Tibial artery (tissue), 4 donors: ENCODE measurements at regions of chr5 and their contacts with region 1.

Region 1: DNA sequence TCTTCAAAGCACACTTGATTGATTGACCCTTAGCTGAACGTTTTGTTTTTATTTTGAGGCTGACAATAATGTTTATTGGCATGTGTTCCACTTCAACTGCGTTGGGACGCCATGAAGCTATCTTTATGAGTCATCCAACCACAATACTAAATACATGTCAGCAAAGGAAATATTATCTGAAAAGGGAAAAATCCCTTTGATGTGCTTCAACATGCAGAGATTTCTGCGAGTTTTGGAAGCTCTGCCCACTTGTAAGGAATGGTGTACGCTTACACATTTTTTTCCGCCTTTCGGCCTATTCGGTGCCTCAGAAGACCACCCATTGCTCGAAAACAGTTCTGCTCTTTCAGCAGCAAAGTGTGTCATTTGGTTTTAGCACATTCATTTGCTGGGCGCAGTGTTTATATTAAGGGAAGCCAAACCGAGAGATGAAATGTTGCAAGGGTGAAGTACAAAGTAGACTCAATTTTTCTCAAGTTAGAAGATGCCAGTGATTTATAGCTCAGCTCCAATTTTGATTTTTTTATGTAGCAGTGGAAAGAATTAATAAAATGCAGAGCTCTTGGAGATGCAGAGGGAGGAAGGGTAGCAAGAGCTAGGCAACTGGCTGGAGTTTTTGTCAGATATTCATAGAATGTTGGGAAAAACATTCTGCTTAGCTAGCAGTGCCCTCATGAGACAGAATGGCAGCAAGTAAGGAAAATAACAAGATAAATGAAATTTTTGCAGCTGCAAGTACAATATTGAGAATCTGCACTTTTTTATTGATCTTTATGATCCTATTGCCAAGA is 68.9 kb downstream of the PRDM6 start:
- DNase-seq: no peak
- H3K4me3 ChIP-seq: peak overlapping the region in 1 of 2 donors; percentile 1
- H3K27ac ChIP-seq: peak overlapping the region; percentile 46 to 68
- H3K4me1 ChIP-seq: peaks cover 0 to 94% (median 50%) of the 10 kb centered on the region in 4 donors
- H3K27me3 ChIP-seq: no peaks in the 10 kb centered on the region
- CTCF ChIP-seq: no peak

Region 2: DNA sequence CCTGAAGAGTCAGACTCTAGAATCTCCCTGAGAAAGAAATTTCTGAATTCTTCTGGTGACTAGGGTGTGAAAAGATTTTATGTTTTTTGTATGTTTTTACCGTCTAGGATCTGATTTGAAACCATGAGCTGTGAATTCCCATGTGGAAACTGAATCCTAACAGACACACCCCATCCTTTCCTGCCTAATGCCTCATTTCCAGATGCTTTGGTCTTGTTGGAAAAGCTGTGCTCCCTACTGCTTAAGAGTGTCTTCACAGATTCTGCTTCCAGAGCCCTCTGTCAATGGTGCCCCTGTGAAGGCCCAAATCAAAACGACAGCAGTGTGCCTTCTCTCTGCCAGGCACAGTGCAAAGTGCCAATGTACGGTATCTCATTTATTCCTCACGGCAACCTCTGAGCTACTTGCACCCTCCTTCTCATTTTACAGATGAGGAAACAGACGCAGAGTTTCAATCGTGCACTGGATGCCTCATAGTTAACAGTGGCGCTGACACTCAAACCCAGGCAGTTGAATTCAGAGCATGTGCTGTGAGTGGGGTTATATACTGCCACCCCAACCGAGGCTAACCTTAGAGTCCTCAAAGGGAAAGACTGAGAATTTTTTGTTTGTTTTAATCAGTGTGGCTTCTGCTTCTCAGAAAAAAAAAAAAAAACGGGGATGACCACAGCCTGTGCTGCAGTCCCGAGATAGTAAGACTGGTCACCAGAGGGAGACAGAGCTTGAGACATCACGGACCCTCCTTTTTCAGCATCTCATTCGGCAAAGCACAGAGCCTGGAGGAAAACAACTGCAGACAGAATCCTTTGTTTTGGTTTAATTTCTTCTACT is 657.5 kb before region 1 on chr5:
- intact Hi-C with region 1: loop called (anchors 5 kb)
- DNase-seq: peak; percentile 52 to 74
- H3K4me3 ChIP-seq: peak overlapping the region; percentile 14 to 29
- H3K27ac ChIP-seq: peak overlapping the region; percentile 61 to 70
- H3K4me1 ChIP-seq: peaks cover 0 to 31% (median 13%) of the 10 kb centered on the region in 4 donors
- H3K27me3 ChIP-seq: no peaks in the 10 kb centered on the region
- CTCF ChIP-seq: peak; percentile 43 to 57

Region 3: DNA sequence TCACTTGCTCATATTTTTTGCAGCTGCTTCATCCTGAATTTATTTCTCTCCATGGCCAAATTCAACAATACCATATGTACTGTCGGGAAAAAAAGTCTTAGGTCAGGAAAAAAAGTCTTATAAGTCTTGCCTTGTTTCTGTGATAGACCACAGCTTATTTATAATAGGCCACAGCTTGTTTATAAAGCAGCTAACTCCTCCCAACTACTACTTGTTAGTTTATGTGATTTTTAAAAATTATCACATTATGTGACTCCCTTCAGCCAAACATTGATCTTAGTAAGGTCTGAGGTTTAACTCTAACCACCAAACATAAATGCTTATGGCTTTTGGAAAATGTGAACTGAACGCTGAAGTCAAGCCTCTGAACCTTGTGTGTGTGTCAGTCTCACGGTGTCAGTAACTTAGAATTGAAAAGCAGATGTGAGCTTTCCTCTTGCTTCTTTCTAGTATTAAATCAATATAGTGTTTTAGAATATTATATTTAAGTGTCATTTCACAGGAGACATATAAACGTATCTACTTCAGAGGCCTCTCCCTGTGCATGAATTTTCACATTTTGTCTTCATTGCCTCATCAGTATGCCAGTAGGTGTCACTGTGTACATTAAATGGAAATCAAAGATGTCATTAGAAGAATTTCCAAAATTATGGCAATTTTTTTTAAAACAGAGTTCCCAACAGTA is 261.2 kb before region 1 on chr5:
- intact Hi-C with region 1: loop called (anchors 5 kb)
- DNase-seq: no peak
- H3K4me3 ChIP-seq: no peak overlapping the region
- H3K27ac ChIP-seq: no peak overlapping the region
- H3K4me1 ChIP-seq: peaks cover 0 to 2% (median 0%) of the 10 kb centered on the region in 4 donors
- H3K27me3 ChIP-seq: no peaks in the 10 kb centered on the region
- CTCF ChIP-seq: peak; percentile 62 to 67

Region 4: DNA sequence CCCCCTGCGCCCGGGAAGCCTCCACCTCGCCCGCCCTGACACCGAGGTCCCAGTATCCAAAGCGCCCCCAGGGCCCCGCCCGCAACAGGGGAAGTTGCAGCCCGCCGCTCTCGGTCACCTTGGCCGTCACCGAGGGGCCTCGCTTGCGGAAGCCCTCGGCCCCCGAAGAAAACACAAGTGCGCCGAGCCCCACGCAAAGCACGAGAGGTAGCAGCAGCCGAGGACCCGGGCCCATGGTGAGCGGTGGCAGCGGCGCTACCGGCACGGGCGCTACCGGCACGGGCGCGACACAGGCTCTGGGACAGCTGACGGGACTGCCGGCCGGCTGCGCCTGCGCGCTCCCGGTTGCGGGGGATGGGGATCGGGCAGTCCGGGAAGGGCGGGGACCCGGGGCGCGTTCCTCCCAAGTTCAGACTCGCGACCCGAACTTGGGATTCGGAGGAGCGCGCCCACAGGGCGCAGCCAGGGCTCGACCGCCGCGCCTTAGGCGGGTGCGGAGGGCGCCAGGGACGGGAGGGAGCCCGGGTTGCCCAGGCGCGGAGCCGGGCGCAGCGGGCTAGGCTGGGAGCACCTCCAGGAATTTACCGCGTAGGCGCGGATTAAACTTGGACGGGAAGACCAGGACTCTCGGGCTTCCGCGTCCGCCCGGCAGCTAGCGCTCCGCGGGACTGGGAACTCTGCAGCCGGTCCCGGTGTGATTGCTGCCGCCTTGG is 121.4 kb before region 1 on chr5 and contains the start of gene PPIC:
- intact Hi-C with region 1: loop called (anchors 5 kb)
- DNase-seq: peak; percentile 86 to 94
- H3K4me3 ChIP-seq: peak within 1 kb of the TSS; percentile 86
- H3K27ac ChIP-seq: peak within 1 kb of the TSS; percentile 86 to 97
- H3K4me1 ChIP-seq: peaks cover 0 to 24% (median 15%) of the 10 kb centered on the region in 4 donors
- H3K27me3 ChIP-seq: no peaks in the 10 kb centered on the region
- CTCF ChIP-seq: no peak

Region 5: DNA sequence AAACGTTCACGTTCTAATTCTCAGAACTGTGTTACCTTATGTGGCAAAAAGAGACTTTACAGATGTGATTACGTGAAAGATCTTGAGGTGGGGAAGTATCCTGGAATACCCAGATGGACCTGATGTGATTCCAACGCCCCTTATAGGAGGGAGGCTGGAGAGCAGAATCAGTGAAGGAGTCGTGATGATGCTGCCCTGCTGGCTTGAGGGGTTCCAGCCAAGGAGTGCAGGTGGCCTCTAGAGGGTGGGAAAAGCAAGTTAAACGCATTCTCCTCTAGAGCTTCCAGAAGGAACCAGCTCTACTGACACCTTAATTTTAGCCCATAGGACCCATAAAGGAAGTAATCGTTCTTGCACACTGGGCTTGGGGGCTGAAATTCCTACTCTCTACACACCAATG is 88.7 kb before region 1 on chr5:
- intact Hi-C with region 1: no loop called
- DNase-seq: no peak
- H3K4me3 ChIP-seq: no peak overlapping the region
- H3K27ac ChIP-seq: no peak overlapping the region
- H3K4me1 ChIP-seq: no peaks in the 10 kb centered on the region
- H3K27me3 ChIP-seq: no peaks in the 10 kb centered on the region
- CTCF ChIP-seq: no peak